Activated CD4-positive, alpha-beta T cell treated with anti-CD3 and anti-CD28 coated beads, Interleukin-2, amount 10 ng/mL, durations not matched to agents 7 days and 5 days (primary cell): ENCODE measurements at regions of chr3 and their contacts with region 1.

Region 1: DNA sequence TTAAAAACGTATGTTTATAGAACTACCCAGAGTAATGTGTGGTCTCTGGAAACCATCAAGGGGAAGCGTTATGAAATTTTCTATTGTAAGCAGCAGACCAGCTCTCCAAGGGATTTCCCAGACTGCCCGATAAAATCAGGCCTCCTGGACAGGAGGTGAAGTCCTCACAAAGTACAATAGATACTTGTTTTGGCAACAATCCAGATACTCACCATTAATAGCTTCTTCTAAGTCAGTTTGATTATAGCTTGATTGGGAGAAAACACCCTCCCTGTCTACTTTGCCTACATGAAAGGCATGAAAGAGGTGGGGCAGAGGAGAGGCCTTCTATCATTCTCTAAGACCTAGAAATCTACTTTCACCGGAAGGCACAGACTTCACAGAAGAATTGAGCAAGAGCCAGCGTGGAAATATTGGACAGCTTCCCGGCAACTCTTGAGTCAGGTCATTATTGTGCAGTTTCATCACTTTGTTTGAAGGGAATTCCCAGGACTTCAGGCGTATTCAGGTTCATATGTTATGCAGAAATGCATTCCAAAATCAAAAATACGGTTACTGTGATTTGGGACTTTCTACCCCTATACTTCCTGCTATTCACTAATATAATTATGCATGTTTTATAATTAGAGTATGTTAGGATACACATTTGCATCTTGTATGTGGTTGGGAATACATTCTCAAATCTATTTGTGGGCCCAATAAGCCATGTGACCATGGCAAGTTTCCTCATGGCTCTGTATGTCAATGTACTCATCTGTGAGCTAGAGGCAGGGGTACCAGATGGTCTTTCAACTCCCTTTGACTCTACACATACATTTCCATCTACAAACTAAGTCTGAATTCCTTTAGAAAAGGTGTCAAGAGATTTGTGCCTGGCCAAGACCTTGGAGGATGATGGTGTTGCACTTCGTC is 103.5 kb downstream of the CD47 start:
- DNase-seq: no peak
- H3K4me3 Mint-ChIP-seq: no peak overlapping the region
- H3K27ac Mint-ChIP-seq: no peak overlapping the region
- H3K4me1 Mint-ChIP-seq: peaks cover 28% of the 10 kb centered on the region
- H3K27me3 Mint-ChIP-seq: no peaks in the 10 kb centered on the region

Region 2: DNA sequence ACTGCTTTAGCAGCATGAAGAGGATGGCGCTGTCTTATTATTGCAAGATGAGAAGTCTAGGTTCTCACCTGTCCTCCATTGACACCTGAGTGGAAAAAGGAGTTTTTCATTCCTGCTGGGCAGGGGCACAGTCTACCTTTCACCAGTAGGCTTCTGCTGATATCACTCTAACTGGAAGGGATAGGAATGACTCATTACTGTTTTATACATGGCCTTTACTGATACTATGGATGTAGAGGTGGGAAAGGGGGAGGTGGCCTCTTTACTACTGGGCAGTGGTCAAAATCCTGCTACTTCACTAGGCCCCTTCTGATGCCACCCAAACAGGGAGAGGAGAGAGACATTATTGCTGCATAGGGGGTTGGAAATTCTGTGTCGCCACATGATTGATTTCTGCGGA is 366.8 kb before region 1 on chr3:
- CTCF ChIA-PET with region 1: interaction called, 10 read pairs
- POLR2A ChIA-PET with region 1: no interaction called
- DNase-seq: no peak
- H3K4me3 Mint-ChIP-seq: no peak overlapping the region
- H3K27ac Mint-ChIP-seq: no peak overlapping the region
- H3K4me1 Mint-ChIP-seq: peaks cover 21% of the 10 kb centered on the region
- H3K27me3 Mint-ChIP-seq: no peaks in the 10 kb centered on the region

Region 3: DNA sequence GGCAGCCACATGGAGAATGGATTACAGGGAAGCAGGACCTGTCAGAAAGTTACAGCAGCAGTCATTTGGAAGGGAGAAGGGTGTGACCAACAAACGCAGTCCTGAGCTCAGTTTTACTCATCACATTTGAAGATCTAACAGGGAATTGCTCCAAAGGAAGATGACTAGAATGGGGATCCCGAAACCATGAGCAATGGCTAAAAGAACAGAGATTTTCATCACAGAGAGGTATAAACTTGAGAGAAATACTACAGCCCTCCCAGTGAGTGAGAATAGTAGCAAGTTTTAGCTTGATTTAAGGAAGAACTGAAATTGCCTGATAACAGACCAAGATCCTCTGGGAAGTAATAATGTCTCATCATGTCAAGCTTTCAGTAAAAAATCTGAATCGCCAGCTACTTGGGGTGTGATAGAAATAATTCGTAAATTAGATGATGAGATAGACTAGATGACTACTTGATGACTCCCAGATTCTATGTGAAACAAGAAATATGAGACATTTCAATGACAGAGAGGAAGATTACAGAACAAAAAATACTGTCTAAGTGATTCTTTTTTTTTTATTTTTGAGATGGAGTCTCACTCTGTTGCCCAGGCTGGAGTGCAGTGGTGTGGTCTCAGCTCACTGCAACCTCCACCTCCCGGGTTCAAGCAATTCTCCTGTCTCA is 86.6 kb after region 1 on chr3:
- CTCF ChIA-PET with region 1: no interaction called
- POLR2A ChIA-PET with region 1: no interaction called
- DNase-seq: no peak
- H3K4me3 Mint-ChIP-seq: no peak overlapping the region
- H3K27ac Mint-ChIP-seq: no peak overlapping the region
- H3K4me1 Mint-ChIP-seq: peaks cover 66% of the 10 kb centered on the region
- H3K27me3 Mint-ChIP-seq: no peaks in the 10 kb centered on the region

Region 4: DNA sequence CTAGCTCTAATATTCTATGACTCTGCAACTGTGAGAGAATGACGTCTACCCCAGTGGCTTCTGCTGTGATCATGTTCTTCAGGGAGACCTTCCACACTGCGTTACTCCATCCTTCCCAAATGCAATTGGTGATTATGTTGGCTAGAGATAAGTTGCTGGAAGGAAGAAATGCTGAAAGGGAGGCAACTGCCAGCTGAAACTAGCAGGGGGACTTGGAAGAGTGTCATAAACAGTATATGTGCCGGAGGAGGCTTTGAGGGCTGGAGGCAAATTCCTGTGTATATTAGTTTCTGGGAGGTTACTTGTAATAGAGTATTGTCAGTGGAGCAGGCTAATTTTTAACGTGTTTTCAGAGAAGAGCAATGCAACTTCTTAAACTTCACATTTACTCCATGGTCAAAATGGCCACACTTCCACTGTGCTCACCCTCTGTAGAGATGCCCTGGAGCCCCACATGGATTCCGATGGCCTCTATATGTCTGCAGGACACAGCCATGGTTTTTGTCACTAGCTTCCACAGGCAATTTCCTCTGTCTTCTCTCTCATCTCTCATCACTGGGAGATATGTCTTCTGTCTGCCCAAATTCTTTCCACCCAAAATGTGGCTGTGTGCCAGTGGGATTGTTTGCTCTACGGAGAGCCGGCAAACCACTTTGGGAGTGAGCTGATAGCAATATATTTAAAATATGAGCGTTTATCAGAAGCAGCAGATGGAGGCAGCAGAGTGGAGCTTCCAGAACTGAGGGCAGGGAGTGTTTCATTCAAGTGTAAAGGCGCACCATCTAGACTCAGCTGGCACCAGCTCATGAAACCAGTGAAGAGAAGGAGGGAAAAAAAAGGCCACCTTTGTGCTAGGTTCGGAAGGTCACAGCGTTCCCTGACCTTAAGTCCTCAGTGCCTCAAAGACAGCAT is 116.8 kb after region 1 on chr3:
- CTCF ChIA-PET with region 1: no interaction called
- POLR2A ChIA-PET with region 1: no interaction called
- DNase-seq: no peak
- H3K4me3 Mint-ChIP-seq: no peak overlapping the region
- H3K27ac Mint-ChIP-seq: no peak overlapping the region
- H3K4me1 Mint-ChIP-seq: peaks cover 35% of the 10 kb centered on the region
- H3K27me3 Mint-ChIP-seq: no peaks in the 10 kb centered on the region